Activated T-helper 2 cell treated with anti-CD3 and anti-CD28 coated beads, Interferon-gamma antibody, Interleukin-2, Interleukin-4, amounts not matched to agents 10 μg/mL and 5 μg/mL and 100 μg/mL, durations not matched to agents 14 hours and 24 hours and 36 hours (primary cell): ENCODE measurements at regions of chr13 and their contacts with region 1.

Region 1: DNA sequence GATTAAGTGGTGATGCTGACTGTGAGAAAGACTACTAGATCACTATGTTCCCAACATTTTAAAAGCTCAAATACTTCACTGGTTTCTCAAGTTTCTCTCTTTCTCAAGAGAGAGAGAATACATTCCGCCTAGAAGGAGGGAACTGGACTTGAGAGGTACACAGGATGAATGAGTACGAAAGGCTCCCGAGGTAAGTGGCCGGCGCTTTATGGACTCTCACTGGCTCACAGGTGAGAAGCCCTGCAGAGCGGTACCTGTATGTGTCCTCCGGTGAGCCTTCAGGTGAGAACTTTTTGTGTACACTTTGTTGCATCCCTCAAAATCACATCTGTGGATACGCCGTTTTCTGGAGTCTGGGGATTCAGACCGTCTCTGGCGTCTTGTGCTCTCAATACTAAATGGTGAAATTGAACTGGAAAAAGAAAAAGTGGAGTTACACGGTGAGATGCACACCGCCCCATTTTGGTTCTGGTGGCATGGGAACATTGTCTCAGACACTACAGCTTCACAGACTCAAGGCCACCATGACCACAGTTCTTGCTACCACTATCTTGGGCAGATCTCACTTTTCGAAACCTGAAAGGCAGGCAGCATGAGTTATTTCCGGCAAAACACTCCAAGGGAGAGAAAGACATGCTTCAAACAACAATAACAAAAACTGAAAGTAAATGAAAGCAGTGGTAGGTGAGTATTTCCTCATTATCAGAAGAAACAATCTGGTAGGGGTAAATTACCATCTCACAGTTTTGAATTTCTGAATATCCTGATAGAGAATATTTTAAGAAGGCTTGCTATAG is 418.9 kb downstream of the KLF12 start:
- DNase-seq: peak; percentile 53
- H3K4me3 Mint-ChIP-seq: peak overlapping the region; percentile 55
- H3K27ac Mint-ChIP-seq: peak overlapping the region; percentile 79
- H3K4me1 Mint-ChIP-seq: peaks cover 54% of the 10 kb centered on the region
- H3K27me3 Mint-ChIP-seq: no peaks in the 10 kb centered on the region

Region 2: GRCh38 chr13:73421310-73421912 is 293.9 kb before region 1 on chr13:
- intact Hi-C with region 1: loop called (anchors 2 kb)
- DNase-seq: no peak
- H3K4me3 Mint-ChIP-seq: no peak overlapping the region
- H3K27ac Mint-ChIP-seq: no peak overlapping the region
- H3K4me1 Mint-ChIP-seq: no peaks in the 10 kb centered on the region
- H3K27me3 Mint-ChIP-seq: peaks cover 8% of the 10 kb centered on the region

Region 3: GRCh38 chr13:73618275-73618865 is 96.9 kb before region 1 on chr13:
- intact Hi-C with region 1: no loop called
- DNase-seq: no peak
- H3K4me3 Mint-ChIP-seq: no peak overlapping the region
- H3K27ac Mint-ChIP-seq: no peak overlapping the region
- H3K4me1 Mint-ChIP-seq: peaks cover 22% of the 10 kb centered on the region
- H3K27me3 Mint-ChIP-seq: peaks cover 14% of the 10 kb centered on the region

Region 4: DNA sequence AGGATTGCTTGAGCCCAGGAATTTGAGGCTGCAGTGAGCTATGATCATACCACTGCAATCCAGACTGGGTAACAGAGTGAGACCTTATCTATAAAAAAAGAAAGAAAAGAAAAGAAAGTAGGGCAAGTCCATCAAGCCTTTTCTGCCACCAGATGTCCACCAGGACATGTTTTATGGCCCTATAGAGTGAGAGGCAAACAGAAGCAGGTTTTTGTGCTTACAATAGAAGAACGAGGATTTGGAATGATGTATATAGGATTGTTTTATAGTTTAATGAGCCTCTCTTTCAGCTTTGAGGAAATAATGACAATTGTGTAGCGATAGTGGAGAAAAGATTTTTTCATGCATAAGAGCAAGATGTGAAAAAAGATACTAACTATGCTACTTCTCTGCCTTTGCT is 61.6 kb before region 1 on chr13:
- intact Hi-C with region 1: no loop called
- DNase-seq: no peak
- H3K4me3 Mint-ChIP-seq: no peak overlapping the region
- H3K27ac Mint-ChIP-seq: no peak overlapping the region
- H3K4me1 Mint-ChIP-seq: no peaks in the 10 kb centered on the region
- H3K27me3 Mint-ChIP-seq: no peaks in the 10 kb centered on the region

Region 5: DNA sequence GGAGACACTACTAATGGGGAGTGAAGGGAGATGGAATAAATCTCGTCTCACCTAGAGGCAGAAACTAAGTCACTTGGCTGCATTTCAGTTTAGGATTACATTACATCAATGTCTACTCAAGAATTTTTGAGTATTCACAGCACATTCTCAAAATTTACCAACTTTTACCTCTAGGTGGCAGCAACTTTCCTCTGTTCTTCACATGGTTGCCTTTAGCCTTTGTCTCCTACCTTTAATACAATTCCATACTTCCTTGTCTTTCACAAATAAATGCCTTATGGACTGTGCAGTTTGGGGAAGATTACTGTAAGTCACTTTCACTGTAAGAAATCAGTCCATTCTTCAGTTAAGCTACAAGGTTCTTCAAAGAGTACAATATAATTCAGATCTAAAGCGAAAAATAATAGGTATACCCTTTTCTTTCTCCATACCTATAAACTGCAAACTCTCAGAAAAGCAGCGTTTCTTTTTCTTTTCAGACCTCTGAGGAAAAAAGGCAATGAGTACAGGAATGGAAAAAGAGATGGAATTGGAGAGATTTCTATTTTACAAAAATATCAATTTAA is 39.5 kb after region 1 on chr13:
- intact Hi-C with region 1: no loop called
- DNase-seq: no peak
- H3K4me3 Mint-ChIP-seq: no peak overlapping the region
- H3K27ac Mint-ChIP-seq: no peak overlapping the region
- H3K4me1 Mint-ChIP-seq: peaks cover 7% of the 10 kb centered on the region
- H3K27me3 Mint-ChIP-seq: no peaks in the 10 kb centered on the region

Region 6: GRCh38 chr13:73924607-73925006 is 209.3 kb after region 1 on chr13:
- intact Hi-C with region 1: loop called (anchors 5 kb)
- DNase-seq: no peak
- H3K4me3 Mint-ChIP-seq: no peak overlapping the region
- H3K27ac Mint-ChIP-seq: peak overlapping the region; percentile 72
- H3K4me1 Mint-ChIP-seq: peaks cover 58% of the 10 kb centered on the region
- H3K27me3 Mint-ChIP-seq: no peaks in the 10 kb centered on the region

Region 7: GRCh38 chr13:74062933-74063332 is 347.6 kb after region 1 on chr13:
- intact Hi-C with region 1: loop called (anchors 10 kb)
- DNase-seq: no peak
- H3K4me3 Mint-ChIP-seq: peak overlapping the region; percentile 79
- H3K27ac Mint-ChIP-seq: peak overlapping the region; percentile 93
- H3K4me1 Mint-ChIP-seq: peaks cover 64% of the 10 kb centered on the region
- H3K27me3 Mint-ChIP-seq: no peaks in the 10 kb centered on the region

Region 8: DNA sequence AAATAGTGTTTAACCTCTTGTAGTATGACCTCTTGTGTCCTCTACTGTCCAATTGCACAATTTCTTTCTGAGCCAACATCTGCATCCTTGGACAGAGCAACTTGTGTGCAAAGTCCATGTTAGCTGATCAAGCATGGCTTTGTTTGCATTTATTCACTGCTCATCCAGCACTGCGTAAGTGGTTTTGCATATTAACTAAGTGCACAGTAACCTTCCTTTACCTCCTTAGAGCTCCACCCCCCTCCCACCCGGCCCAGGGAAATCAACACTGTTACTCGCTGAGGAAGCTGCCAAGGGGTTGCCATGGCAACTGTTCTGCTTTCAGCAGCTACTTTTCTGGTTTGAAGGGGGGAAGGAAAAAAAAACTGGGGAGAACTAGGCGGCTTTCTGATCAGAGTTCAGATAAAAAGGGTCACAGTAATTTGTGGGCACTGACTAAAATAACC is 572.4 kb after region 1 on chr13:
- intact Hi-C with region 1: loop called (anchors 5 kb)
- DNase-seq: peak; percentile 71
- H3K4me3 Mint-ChIP-seq: peak overlapping the region; percentile 15
- H3K27ac Mint-ChIP-seq: peak overlapping the region; percentile 33
- H3K4me1 Mint-ChIP-seq: peaks cover 33% of the 10 kb centered on the region
- H3K27me3 Mint-ChIP-seq: peaks cover 20% of the 10 kb centered on the region

Region 9: DNA sequence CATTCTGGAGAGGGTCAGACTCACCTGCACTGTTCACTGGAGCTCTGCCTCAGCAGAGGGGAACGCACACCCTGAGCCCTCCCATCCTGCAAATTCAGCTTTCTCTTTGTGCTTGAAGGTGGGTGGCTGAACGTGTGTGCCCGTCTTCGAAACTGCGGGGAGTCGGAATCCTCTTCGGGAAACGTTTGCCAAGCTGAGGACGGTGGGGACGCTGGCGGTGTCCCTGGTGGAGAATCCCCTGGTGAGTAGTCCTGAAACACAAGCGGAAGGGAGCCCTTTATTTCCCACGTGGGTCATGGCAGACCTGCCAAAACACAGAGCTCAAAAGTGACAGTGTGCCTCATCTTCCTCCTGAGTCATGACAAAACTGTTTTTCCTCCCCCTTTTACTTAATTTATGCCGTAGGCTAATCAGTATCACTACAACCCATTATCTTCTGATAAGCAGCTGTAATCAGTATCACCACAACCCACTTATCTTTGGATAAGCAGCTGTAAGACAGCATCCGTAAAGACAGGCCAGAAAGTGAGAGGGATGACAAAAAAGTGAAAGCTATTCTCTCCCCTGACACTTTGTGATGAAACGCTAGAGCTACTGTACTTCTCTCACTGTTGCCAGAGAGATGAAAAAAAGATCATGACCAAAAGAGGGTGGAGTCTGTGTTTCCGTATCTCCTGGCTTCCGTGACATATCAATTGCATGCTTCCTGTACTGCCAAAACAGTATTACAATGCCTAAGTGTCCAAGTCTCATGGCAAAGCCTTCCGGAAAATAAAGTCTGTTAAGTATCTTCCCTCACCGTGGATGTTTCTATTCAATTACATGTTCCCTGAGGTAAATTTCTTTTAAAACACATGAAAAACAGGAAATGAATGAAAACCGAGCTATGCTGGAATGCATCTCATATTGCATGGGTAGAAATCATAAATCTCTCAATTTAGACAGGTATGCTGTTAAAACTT is 1611.1 kb after region 1 on chr13:
- intact Hi-C with region 1: loop called (anchors 1 kb)
- DNase-seq: peak; percentile 56
- H3K4me3 Mint-ChIP-seq: peak overlapping the region; percentile 86
- H3K27ac Mint-ChIP-seq: peak overlapping the region; percentile 95
- H3K4me1 Mint-ChIP-seq: peaks cover 54% of the 10 kb centered on the region
- H3K27me3 Mint-ChIP-seq: no peaks in the 10 kb centered on the region